Tibial artery (tissue), 4 donors: ENCODE measurements at regions of chr7 and their contacts with region 1.

Region 1: GRCh38 chr7:48109848-48110663 is 21.0 kb downstream of the UPP1 start:
- DNase-seq: peak; percentile 78 to 83
- H3K4me3 ChIP-seq: no peak overlapping the region
- H3K27ac ChIP-seq: no peak overlapping the region
- H3K4me1 ChIP-seq: no peaks in the 10 kb centered on the region
- H3K27me3 ChIP-seq: no peaks in the 10 kb centered on the region
- CTCF ChIP-seq: peak; percentile 98 to 99

Region 2: DNA sequence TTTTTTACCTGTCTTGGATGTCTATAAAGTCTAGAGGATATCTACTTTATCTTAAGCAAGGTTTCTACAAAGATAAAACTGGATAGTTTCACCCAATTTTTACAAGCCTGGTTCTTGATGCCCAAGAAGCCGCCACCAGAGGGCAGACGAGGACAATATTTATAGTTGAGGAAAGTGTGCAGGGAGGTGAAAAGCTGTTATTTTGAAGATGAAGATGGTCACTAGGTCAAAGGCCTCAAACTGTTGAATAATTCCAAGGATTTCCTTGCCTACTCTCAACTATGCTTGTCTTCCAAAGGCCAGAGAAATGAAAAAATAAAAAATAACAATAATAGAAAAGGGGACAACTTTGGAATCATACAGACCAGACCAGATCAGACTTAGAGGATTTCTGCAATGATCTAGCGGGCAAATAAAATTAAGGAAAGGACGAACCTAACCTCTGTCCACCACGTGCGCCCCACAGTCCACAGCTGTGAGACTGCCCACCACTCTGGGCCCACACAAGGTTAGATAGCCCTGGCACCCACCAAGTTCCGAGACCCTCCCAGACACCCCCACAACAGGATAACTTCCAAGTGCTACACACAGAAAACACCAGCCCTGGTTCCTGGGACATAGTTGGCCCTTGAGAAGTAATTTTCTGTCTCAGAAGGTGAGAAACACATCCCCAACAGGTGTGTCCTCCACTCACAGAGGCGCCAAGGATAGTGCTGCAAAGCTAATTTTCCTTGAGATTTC is 164.6 kb before region 1 on chr7:
- intact Hi-C with region 1: loop called (anchors 2 kb)
- DNase-seq: peak; percentile 82 to 91
- H3K4me3 ChIP-seq: no peak overlapping the region
- H3K27ac ChIP-seq: no peak overlapping the region
- H3K4me1 ChIP-seq: peaks cover 0 to 18% (median 12%) of the 10 kb centered on the region in 4 donors
- H3K27me3 ChIP-seq: no peaks in the 10 kb centered on the region
- CTCF ChIP-seq: peak; percentile 75 to 79

Region 3: DNA sequence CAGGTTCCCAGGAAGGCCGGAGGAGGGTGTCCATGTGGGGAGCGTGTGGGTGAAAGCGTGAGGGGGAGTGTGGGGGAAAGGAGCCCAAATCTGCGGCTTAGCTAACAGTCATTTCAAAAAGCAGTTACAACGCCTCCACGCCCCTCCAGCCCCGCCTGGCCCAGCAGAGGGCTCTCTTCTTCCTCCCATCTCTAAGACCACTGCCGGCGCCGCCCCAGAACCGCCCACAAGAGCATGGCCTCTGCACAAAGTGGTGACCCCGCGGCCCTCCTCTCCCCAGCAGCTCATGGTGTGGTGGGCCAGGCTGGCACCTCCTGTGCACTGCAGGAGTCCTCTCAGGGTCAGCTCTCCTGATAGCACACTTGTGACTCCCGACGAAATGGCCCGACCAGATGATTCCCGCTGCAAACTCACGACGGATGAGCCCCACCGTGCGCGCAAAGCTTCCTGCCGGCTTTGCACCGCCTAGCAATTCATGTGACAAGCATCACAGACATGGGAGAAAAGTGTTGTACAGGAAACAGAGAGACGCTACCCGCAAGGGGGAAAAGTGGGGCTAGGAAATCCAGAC is 118.2 kb before region 1 on chr7:
- intact Hi-C with region 1: loop called (anchors 5 kb)
- DNase-seq: peak; percentile 88 to 90
- H3K4me3 ChIP-seq: peak overlapping the region; percentile 44 to 57
- H3K27ac ChIP-seq: peak overlapping the region in 1 of 2 donors; percentile 38
- H3K4me1 ChIP-seq: peaks cover 0 to 6% (median 0%) of the 10 kb centered on the region in 4 donors
- H3K27me3 ChIP-seq: no peaks in the 10 kb centered on the region
- CTCF ChIP-seq: peak; percentile 63 to 65

Region 4: GRCh38 chr7:48035301-48035966 is 74.6 kb before region 1 on chr7 and contains the start of gene C7orf57:
- intact Hi-C with region 1: loop called (anchors 2 kb)
- DNase-seq: peak; percentile 89 to 93
- H3K4me3 ChIP-seq: peak within 1 kb of the TSS; percentile 46 to 62
- H3K27ac ChIP-seq: no peak within 1 kb of the TSS
- H3K4me1 ChIP-seq: peaks cover 0 to 17% (median 11%) of the 10 kb centered on the region in 4 donors
- H3K27me3 ChIP-seq: peaks cover 0 to 3% of the 10 kb centered on the region in 2 donors
- CTCF ChIP-seq: peak; percentile 28 to 34

Region 5: DNA sequence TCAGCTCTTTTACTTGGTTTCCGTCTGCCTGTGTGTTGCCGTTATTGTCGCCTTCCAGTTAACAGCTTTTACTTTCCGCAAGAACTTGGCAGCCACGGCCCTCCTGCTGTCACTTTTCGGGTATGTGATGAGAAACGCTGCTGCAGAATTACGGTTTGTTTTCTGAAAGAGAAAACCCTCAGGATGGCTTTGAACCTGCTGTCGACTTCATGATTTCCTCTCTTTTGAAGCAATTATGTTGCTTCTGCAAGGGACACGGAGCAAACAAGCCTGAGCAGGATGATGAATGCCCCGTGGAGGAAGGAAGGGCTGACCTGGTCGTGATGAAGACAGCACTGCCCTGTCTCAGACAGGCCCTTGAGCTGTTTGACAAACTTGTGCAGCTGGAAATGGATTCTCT is 401.0 kb after region 1 on chr7:
- intact Hi-C with region 1: no loop called
- DNase-seq: no peak
- H3K4me3 ChIP-seq: no peak overlapping the region
- H3K27ac ChIP-seq: no peak overlapping the region
- H3K4me1 ChIP-seq: no peaks in the 10 kb centered on the region
- H3K27me3 ChIP-seq: no peaks in the 10 kb centered on the region
- CTCF ChIP-seq: no peak